ENCODE measurements at regions of chr13 and their contacts with region 1.

Region 1: DNA sequence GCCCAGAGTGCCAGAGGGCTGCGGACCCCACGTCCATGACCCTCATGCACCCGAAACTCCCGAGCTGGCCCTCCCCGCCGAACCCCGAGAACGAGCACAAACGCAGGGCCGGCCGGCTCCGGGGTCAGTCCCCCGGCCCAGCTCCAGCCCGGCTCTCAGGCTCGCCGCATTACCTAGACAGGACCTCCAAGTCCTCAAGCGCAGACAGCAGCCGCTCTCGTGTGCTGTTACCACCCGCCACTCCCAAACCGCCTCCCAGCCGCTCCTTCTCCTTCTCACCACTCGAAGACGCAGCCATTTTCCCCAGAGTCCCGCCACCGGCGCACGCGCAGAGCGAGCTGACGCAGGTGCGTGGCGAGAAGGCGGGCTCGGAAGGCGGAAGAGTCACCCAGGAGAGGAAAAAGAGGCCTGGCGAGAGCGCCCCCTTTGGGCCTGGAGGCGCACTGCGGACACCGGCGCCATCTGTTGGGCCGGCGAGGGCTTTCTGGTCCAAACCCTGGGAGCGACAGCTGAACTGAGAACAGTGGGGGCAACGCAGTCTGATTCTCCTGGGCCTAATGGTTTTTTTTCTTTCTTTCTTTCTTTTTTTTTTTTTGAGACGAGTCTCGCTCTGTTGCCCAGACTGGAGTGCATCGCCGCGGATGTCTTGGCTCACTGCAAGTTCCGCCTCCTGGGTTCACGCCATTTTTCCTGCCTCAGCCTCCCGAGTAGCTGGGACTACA is at the start of gene MED4:
- DNase-seq: peak; percentile 98
- CTCF ChIP-seq: peak; percentile 100

Region 2: DNA sequence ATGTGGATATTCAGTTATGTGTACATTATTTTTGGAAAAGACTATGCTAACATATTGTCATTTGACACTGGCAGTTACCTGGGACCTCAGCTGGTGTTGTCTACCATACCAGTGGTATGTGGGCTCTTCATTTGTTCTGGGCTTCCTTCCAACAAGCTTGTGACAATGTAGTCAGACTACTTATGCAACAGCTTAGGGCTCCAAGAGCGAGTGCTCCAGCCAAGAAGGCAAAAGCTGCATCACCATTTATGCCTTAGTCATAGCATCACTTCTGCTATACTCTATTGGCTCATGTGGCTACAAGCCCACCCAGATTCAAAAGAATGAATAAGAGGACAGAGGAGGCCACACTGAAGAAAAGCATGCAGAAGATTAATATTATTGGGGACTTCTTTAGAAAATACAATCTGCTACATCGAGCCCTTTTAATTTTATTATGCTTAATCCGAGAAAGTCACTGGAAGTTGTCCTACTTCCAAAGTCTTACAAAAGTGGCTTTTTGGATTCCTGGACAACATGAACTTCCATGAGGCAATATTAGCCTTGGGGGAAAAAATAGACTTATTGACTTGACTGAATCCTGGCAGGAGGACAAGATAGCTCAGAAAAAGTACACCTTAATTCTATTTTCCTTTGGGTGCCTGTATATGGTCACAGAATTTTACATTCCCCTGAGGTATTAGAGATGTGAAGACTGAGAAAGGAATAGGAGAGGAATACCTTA is 668.7 kb before region 1 on chr13:
- CTCF ChIA-PET with region 1: no interaction called
- POLR2A ChIA-PET with region 1: no interaction called
- DNase-seq: no peak
- CTCF ChIP-seq: no peak

Region 3: DNA sequence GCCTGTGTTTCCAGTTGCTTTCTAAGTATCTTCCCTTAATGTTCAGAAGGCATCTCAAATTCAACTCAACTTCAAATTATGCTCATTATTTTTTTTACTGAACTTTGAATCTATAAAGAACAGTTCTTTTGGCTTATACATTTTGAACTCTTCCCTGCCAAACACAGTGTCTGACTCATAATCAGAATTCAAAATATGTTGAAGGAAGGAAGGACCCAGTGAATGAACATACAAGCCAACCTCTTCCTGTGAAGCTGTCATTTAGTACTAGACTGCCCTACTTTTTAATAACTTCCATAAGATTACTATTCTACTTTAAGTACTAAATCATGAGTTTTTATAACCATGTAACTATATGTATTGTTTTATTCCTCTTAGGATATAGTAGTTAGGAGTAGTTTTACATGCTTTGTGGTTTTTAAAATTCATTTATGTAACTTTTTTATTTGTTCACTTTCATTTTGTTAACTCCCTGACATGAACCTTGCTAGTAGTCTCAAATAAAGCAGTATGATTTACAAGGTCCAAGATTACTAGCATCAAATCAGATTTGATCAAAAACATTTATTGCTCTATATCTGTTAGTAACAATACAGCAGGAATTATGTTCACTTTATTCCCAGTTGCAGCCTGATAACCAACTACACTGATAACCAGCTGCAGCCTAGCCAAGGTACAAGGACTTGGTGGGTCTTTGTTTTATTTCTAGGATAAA is 51.0 kb before region 1 on chr13:
- CTCF ChIA-PET with region 1: interaction called, 29 read pairs
- POLR2A ChIA-PET with region 1: no interaction called
- DNase-seq: no peak
- CTCF ChIP-seq: no peak

Region 4: GRCh38 chr13:48078251-48078656 is 16.7 kb before region 1 on chr13:
- CTCF ChIA-PET with region 1: interaction called, 22 read pairs
- POLR2A ChIA-PET with region 1: no interaction called
- DNase-seq: peak; percentile 48
- CTCF ChIP-seq: peak; percentile 20